Astrocyte of the cerebellum (primary cell): ENCODE measurements at regions of chr18 and their contacts with region 1.

Region 1: GRCh38 chr18:33937270-33937816 is 287.4 kb downstream of the NOL4 start:
- DNase-seq: no peak
- H3K4me3 ChIP-seq: no peak overlapping the region
- CTCF ChIP-seq: no peak

Region 2: GRCh38 chr18:33833847-33834246 is 103.5 kb before region 1 on chr18:
- in situ Hi-C with region 1: loop called (anchors 5 kb)
- DNase-seq: no peak
- H3K4me3 ChIP-seq: no peak overlapping the region
- CTCF ChIP-seq: no peak

Region 3: DNA sequence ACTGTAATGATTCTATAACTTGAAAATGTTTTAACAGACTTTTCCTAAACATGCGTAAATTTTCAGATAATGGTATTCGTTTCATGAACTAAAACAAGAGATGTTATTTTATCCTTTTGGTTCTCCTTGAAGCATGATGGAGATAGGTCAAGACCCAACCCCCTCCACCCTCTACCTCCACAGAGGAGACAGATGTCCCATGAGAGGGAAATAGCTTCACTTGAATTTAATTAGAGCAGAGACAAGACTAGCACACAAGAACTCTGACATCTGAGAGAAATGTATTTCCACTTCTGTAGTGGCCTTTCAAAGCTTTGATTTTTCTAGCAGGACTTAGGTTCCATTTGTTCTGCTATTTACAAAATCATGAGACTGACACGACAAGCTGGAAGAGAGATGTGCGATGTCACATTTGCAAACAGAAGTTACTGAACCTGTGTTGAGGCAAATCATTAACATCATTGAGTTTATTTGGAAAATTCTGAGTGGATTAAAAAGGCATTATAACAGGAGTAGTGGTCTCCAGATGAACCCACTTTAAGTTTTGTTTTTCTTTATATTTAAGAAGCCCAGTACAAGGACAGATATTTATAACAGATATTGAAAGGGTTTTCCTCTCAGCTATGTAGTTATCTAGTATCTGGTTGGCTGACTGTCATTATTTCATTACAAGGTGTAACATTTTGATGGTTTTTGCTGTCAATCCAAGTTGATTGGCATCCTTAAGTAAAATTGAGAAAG is 83.1 kb before region 1 on chr18:
- in situ Hi-C with region 1: no loop called
- DNase-seq: no peak
- H3K4me3 ChIP-seq: no peak overlapping the region
- CTCF ChIP-seq: no peak

Region 4: GRCh38 chr18:34023471-34023870 is 86.1 kb after region 1 on chr18:
- in situ Hi-C with region 1: loop called (anchors 5 kb)
- DNase-seq: peak; percentile 49
- H3K4me3 ChIP-seq: no peak overlapping the region
- CTCF ChIP-seq: no peak